Activated naive CD4-positive, alpha-beta T cell treated with anti-CD3 and anti-CD28 coated beads for 36 hours (primary cell): ENCODE measurements at regions of chr7 and their contacts with region 1.

Region 1: DNA sequence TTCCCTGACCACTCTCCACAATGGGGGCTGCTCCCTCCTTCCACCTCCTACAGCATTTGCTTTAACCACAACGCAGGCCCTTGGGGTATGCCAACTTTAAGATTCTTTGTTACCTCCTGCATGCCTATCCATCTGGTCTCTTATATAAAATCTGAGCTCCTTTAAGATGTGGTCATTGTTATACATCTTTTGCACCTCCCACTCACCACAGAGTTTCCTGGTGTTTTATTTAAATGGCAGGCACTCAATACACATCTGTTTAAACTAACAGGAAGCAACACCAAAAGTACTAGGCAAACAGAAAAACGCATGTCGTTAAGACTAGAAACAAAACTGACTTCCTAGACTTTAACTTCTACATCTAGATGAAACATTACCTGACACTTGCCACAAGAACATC is 36.3 kb downstream of the SLC25A13 start:
- DNase-seq: peak; percentile 39
- H3K4me3 Mint-ChIP-seq: no peak overlapping the region
- H3K27ac Mint-ChIP-seq: peak overlapping the region; percentile 79
- H3K4me1 Mint-ChIP-seq: peaks cover 38% of the 10 kb centered on the region
- H3K27me3 Mint-ChIP-seq: no peaks in the 10 kb centered on the region

Region 2: DNA sequence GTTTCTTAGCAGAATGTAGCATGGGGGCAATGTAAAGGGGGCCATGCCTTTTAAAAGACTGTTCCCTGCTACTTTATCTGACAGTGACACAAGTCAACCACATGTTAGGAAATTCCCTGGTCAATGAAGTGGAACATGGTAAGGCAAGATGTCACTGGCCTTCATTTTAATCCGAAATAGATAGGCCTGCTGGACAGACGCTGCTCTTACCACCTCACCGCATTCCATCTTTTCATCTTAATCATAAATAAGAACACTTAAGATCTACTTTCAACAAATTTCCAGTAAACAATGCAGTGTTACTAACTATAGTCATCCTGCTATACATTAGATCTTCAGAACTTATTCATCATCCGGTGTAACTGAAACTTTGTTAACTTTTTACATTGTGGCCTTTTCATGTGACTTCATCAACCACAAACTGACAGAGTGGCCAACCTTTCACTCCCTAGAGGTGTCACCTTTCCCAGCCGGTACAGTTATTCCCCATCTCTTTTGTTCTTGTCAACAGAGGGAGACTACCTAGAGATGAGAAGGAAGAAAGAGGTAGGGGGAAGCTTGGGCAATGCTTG is 784.2 kb before region 1 on chr7:
- CTCF ChIA-PET with region 1: no interaction called
- intact Hi-C with region 1: loop called (anchors 1 kb)
- DNase-seq: peak; percentile 52
- H3K4me3 Mint-ChIP-seq: no peak overlapping the region
- H3K27ac Mint-ChIP-seq: peak overlapping the region; percentile 37
- H3K4me1 Mint-ChIP-seq: peaks cover 24% of the 10 kb centered on the region
- H3K27me3 Mint-ChIP-seq: peaks cover 25% of the 10 kb centered on the region

Region 3: DNA sequence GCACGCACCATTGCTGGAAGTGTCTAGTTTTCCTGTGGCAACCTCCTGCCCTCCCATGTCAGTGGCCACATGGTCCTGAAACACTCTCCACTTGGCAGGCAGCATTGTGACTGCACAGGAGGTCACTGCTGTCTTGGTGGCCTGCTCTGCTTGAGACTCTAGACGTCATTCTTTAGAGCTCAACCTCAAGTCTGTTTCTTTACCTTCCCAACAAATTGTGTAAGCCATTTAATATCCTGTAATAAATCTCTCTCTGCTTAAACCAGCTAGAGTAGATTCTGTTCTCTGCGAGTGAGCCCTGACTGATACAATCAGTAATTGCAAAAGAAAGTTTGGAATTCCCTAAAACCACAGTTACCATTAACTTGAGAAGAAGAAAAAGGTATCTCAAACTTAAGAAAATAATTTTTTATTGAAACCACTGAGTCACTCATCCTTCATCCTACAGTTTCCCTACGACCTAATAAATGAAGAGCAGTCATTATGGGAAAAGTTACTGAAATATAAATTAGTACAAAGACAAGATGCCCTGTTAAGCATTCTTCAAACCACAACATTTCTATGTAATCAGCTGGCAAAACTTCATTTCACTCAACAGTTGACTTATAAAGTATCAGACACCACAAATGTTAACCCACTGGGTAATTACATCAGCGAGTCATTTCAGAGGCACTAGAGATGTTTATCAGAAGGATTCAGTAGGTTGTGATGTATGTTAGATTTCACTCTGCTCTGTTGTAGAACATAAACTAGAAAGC is 18.3 kb after region 1 on chr7:
- CTCF ChIA-PET with region 1: no interaction called
- intact Hi-C with region 1: loop called (anchors 1 kb)
- DNase-seq: no peak
- H3K4me3 Mint-ChIP-seq: no peak overlapping the region
- H3K27ac Mint-ChIP-seq: peak overlapping the region; percentile 73
- H3K4me1 Mint-ChIP-seq: peaks cover 39% of the 10 kb centered on the region
- H3K27me3 Mint-ChIP-seq: no peaks in the 10 kb centered on the region